Astrocyte of the cerebellum (primary cell): ENCODE measurements at regions of chr15 and their contacts with region 1.

Region 1: GRCh38 chr15:88756921-88757320 is 46.3 kb upstream of the ACAN start:
- DNase-seq: no peak
- H3K4me3 ChIP-seq: no peak overlapping the region
- CTCF ChIP-seq: no peak

Region 2: DNA sequence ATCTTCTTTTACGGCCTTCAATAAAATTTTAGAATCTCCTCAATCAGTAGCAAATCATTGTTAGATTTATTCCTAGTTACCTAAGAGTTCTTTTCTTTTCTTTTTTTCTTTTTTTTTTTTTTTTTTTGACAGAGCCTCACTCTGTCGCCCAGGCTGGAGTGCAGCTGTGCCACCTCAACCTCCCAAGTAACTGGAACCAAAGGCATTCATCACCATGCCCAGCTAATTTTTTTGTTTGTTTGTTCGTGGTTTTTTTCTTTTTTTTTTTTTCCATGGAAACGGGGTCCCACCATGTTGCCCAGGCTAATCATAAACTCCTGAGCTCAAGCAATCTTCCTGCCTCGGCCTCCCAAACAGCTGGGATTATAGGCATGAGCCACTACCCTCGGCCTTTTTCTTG is 166.2 kb before region 1 on chr15:
- in situ Hi-C with region 1: no loop called
- DNase-seq: no peak
- H3K4me3 ChIP-seq: no peak overlapping the region
- CTCF ChIP-seq: no peak

Region 3: GRCh38 chr15:88674661-88675060 is 82.3 kb before region 1 on chr15:
- in situ Hi-C with region 1: loop called (anchors 5 kb)
- DNase-seq: no peak
- H3K4me3 ChIP-seq: no peak overlapping the region
- CTCF ChIP-seq: no peak